AG04450 (cell line): ENCODE measurements at regions of chr7 and their contacts with region 1.

Region 1: GRCh38 chr7:28466341-28466740 is 54.0 kb downstream of the CREB5 start:
- DNase-seq: no peak
- H3K4me3 ChIP-seq: no peak overlapping the region
- H3K27ac ChIP-seq: no peak overlapping the region
- H3K27me3 ChIP-seq: no peaks in the 10 kb centered on the region
- CTCF ChIP-seq: no peak

Region 2: GRCh38 chr7:28520074-28521015 is 54.0 kb after region 1 on chr7:
- CTCF ChIA-PET with region 1: interaction called, 11 read pairs
- POLR2A ChIA-PET with region 1: no interaction called
- DNase-seq: no peak
- H3K4me3 ChIP-seq: no peak overlapping the region
- H3K27ac ChIP-seq: no peak overlapping the region
- H3K27me3 ChIP-seq: no peaks in the 10 kb centered on the region
- CTCF ChIP-seq: no peak